ENCODE measurements at regions of chr10 and their contacts with region 1.

Region 1: GRCh38 chr10:114703377-114704107 is 45.5 kb upstream of the ABLIM1 start:
- DNase-seq: peak; percentile 64
- H3K4me3 ChIP-seq: no peak overlapping the region
- H3K27ac ChIP-seq: no peak overlapping the region
- H3K4me1 ChIP-seq: peaks cover 0 to 4% of the 10 kb centered on the region in 2 experiments; a peak in 2 of 4 replicates
- H3K27me3 ChIP-seq: no peaks in the 10 kb centered on the region
- CTCF ChIP-seq: peak; percentile 81
- EP300 ChIP-seq: no peak
- RAD21 ChIP-seq: peak; percentile 91

Region 2: DNA sequence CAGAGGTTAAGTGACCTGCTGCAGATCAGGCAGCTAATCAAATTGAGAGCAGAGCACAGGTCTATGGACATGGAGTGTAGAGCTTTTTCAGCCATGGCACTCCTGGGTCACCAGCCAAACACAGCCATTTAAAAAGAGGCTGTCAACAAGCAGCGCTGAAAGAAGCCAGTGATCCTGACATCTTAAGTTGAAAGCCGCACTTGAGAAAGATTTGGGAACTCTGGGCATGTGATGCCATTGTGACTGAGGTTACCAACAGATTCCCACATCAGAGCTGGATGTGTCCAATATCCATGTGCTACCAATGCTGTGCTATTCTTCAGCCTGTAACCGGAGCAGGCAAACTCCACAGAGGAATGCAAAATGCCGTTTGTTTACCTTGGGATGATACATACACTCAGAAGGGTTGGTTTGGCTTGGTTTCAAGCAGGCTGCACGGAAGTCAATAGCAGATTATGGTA is 10.8 kb after region 1 on chr10:
- CTCF ChIA-PET with region 1: interaction called, 15 read pairs
- POLR2A ChIA-PET with region 1: no interaction called
- DNase-seq: no peak
- H3K4me3 ChIP-seq: no peak overlapping the region; a peak in 1 of 4 replicates
- H3K27ac ChIP-seq: peak overlapping the region; percentile 90 to 93
- H3K4me1 ChIP-seq: peaks cover 10 to 15% of the 10 kb centered on the region in 2 experiments
- H3K27me3 ChIP-seq: no peaks in the 10 kb centered on the region
- CTCF ChIP-seq: no peak
- EP300 ChIP-seq: no peak
- RAD21 ChIP-seq: no peak

Region 3: GRCh38 chr10:114723991-114724698 is 20.6 kb after region 1 on chr10:
- CTCF ChIA-PET with region 1: interaction called, 11 read pairs
- POLR2A ChIA-PET with region 1: no interaction called
- DNase-seq: no peak
- H3K4me3 ChIP-seq: no peak overlapping the region
- H3K27ac ChIP-seq: no peak overlapping the region
- H3K4me1 ChIP-seq: peaks cover 0 to 19% of the 10 kb centered on the region in 2 experiments; a peak in 2 of 4 replicates
- H3K27me3 ChIP-seq: no peaks in the 10 kb centered on the region
- CTCF ChIP-seq: no peak
- EP300 ChIP-seq: no peak
- RAD21 ChIP-seq: no peak